ENCODE measurements at regions of chr12 and their contacts with region 1.

Region 1: DNA sequence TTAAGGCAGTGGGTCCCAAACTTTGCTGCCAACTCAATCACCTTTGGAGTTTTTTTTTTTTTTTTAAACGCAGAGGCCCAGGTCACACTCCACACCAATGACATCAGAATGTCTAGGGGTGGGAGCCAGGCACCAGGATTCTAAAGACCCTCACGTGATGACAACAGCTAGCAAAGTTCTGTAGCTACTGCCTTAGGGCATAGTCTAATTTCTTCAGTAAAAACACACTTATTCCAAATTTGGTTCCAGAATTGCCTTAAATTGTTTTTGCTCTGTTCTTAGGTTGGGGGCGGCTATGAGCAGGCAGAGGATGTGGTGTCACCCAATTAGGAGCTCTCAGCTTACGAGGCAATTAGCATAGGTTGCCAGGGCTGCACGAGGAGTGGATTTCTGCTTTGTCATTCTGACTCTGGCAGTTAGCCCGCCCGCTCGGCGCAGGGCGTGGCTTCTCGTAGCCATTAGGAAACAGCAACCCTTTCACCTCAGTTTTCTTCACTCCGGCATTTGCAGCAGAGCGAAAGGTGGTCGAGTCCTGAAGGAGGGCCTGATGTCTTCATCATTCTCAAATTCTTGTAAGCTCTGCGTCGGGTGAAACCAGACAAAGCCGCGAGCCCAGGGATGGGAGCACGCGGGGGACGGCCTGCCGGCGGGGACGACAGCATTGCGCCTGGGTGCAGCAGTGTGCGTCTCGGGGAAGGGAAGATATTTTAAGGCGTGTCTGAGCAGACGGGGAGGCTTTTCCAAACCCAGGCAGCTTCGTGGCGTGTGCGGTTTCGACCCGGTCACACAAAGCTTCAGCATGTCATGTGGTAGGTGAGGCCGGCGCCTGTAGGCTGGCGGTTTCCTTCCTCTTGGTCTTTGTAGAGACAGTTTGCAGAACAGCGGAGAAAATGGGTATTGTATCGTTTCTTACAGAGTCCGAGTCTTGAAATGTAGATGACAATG is 16.7 kb upstream of the EID3 start:
- DNase-seq: peak; percentile 96
- ATAC-seq: peak; percentile 80
- H3K4me3 ChIP-seq: peak overlapping the region; percentile 68
- H3K27ac ChIP-seq: peak overlapping the region; percentile 88
- H3K4me1 ChIP-seq: peaks cover 14% of the 10 kb centered on the region
- H3K27me3 ChIP-seq: no peaks in the 10 kb centered on the region
- CTCF ChIP-seq: no peak
- POLR2A ChIP-seq: peak; percentile 98
- RAD21 ChIP-seq: no peak

Region 2: GRCh38 chr12:103975368-103975767 is 311.4 kb before region 1 on chr12:
- CTCF ChIA-PET with region 1: no interaction called
- POLR2A ChIA-PET with region 1: no interaction called
- dilution Hi-C with region 1: no loop called
- in situ Hi-C with region 1: no loop called
- intact Hi-C with region 1: no loop called
- DNase-seq: no peak
- ATAC-seq: no peak
- H3K4me3 ChIP-seq: no peak overlapping the region
- H3K27ac ChIP-seq: no peak overlapping the region; the same call in 1 of the 2 replicates
- H3K4me1 ChIP-seq: peaks cover 2% of the 10 kb centered on the region; the same call in 1 of the 2 replicates
- H3K27me3 ChIP-seq: no peaks in the 10 kb centered on the region
- CTCF ChIP-seq: no peak
- POLR2A ChIP-seq: no peak
- RAD21 ChIP-seq: no peak

Region 3: GRCh38 chr12:104064031-104064822 is 222.6 kb before region 1 on chr12 and contains the start of gene HCFC2:
- CTCF ChIA-PET with region 1: no interaction called
- POLR2A ChIA-PET with region 1: no interaction called
- dilution Hi-C with region 1: no loop called
- in situ Hi-C with region 1: no loop called
- intact Hi-C with region 1: loop called (anchors 5 kb)
- DNase-seq: peak; percentile 87
- ATAC-seq: peak; percentile 95
- H3K4me3 ChIP-seq: peak within 1 kb of the TSS; percentile 89
- H3K27ac ChIP-seq: peak within 1 kb of the TSS; percentile 98
- H3K4me1 ChIP-seq: peaks cover 2% of the 10 kb centered on the region
- H3K27me3 ChIP-seq: no peaks in the 10 kb centered on the region
- CTCF ChIP-seq: no peak
- POLR2A ChIP-seq: no peak
- RAD21 ChIP-seq: no peak
- total RNA-seq, gene HCFC2: 33.3 and 34.2 TPM in 2 replicates

Region 4: DNA sequence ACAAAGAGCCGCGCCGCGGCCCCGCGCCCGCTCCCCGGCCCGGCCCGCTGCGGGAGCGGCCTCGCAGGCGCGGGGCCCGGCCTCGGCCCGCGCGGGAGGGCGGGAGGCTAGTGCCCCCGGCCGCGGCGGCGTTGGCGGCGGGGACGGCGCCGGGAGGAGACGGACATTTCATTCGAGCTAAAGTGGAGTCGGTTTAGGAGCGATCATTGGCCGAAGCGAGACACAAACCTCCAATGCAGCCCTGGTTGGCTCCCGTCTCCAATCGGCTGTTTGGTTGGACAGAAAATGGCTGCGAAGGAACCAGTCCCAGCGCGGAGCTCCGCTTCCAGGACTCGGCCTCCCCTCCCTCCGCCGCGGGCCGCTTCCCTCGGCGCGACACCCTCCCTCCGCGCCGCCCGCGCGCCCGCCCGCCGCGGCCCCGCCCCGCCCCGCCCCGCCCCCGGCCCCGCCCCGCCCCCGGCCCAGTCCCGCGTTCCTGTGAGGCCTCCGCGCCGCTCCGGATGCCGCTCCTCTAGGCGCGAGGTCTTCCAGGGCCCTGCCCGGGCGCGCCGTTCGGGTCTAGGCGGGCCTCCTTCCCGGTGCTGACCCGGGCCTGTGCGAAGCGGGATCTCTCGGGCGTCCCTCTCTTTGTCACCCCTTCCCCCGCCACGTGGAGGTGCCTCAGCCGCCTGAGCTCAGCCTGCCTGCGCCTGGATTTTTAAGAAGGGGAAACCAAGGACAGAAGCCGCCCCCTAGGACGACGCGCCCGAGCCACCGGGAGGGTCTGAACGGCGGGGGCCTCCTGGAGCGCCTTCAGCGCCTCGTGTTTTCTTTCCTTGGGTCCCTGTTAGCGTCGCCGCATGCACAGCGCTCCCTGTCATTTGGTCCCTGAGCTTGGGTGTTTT is 148.7 kb before region 1 on chr12 and contains the start of gene NFYB:
- CTCF ChIA-PET with region 1: no interaction called
- POLR2A ChIA-PET with region 1: no interaction called
- dilution Hi-C with region 1: no loop called
- in situ Hi-C with region 1: no loop called
- intact Hi-C with region 1: loop called (anchors 5 kb)
- DNase-seq: peak; percentile 98
- ATAC-seq: peak; percentile 95
- H3K4me3 ChIP-seq: peak within 1 kb of the TSS; percentile 76
- H3K27ac ChIP-seq: peak within 1 kb of the TSS; percentile 95
- H3K4me1 ChIP-seq: peaks cover 16% of the 10 kb centered on the region
- H3K27me3 ChIP-seq: no peaks in the 10 kb centered on the region
- CTCF ChIP-seq: no peak
- POLR2A ChIP-seq: peak; percentile 73
- RAD21 ChIP-seq: no peak
- total RNA-seq, gene NFYB: 22.2 and 31.4 TPM in 2 replicates

Region 5: GRCh38 chr12:104371043-104371870 is 84.4 kb after region 1 on chr12:
- CTCF ChIA-PET with region 1: no interaction called
- POLR2A ChIA-PET with region 1: no interaction called
- dilution Hi-C with region 1: no loop called
- in situ Hi-C with region 1: no loop called
- intact Hi-C with region 1: no loop called
- DNase-seq: peak; percentile 57
- ATAC-seq: peak; percentile 79
- H3K4me3 ChIP-seq: no peak overlapping the region
- H3K27ac ChIP-seq: no peak overlapping the region
- H3K4me1 ChIP-seq: peaks cover 8% of the 10 kb centered on the region
- H3K27me3 ChIP-seq: no peaks in the 10 kb centered on the region
- CTCF ChIP-seq: no peak
- POLR2A ChIP-seq: no peak
- RAD21 ChIP-seq: no peak

Region 6: DNA sequence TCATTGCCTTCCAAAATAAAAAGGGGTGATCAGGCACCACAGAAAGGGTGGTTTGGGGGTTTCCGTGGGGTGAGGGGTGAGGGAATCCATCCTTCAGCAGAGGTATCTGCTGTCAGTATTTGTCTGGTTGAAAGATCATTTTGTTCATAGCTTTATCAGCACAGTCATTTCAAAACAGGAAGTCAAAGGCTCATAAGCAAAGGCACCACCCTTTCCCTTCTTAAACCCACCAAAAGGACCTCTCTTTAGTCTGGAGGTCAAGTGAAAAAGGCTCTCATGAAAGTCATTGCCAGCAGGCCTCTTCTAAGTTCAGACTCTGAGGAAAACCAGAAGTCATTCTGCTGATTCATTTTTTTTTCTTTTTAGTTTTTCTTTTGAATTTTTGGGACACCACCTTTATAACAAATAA is 176.1 kb after region 1 on chr12:
- CTCF ChIA-PET with region 1: no interaction called
- POLR2A ChIA-PET with region 1: no interaction called
- dilution Hi-C with region 1: no loop called
- in situ Hi-C with region 1: no loop called
- intact Hi-C with region 1: no loop called
- DNase-seq: no peak
- ATAC-seq: no peak
- H3K4me3 ChIP-seq: no peak overlapping the region
- H3K27ac ChIP-seq: no peak overlapping the region
- H3K4me1 ChIP-seq: no peaks in the 10 kb centered on the region
- H3K27me3 ChIP-seq: peaks cover 13% of the 10 kb centered on the region
- CTCF ChIP-seq: no peak
- POLR2A ChIP-seq: no peak
- RAD21 ChIP-seq: no peak

Measured in IMR-90 (cell line).